ENCODE measurements at regions of chr14 and their contacts with region 1.

Region 1: DNA sequence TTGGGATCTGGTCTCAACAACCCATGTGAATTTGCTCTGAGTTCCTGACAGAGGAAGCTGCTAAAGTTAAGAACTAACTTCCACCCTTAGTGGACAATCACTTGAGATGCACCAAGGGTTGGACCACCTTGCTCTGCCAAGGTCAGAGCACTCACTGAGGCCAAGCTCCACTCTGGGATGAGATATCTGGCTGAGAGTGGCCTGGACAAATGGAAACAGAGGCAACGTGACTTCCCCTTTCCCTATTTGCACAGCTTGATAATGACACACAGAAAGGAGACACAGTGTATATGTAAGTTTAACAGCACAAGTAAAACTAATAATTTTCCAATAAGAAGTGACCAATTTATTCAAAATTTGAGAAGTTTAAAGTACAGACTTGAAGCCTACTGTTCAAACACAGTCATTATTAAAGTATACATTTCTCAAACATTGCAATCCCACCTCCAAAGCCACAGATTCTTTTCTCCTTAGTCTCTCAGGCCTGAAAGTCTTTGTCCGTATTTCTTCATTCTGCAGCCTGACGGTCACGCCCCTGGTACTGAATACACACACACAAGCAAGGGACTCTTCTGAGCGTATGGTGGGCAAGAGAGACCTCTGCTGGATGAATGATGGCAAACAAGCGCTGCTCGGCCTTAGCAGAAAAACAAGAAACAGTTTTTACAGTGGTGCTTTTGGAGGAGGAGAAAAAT is 28.6 kb downstream of the TMEM30B start:
- DNase-seq: peak; percentile 99
- ATAC-seq: peak; percentile 91
- H3K4me3 ChIP-seq: no peak overlapping the region
- H3K27ac ChIP-seq: peak overlapping the region; percentile 97
- H3K4me1 ChIP-seq: peaks cover 14% of the 10 kb centered on the region
- H3K27me3 ChIP-seq: no peaks in the 10 kb centered on the region
- CTCF ChIP-seq: peak; percentile 98
- POLR2A ChIP-seq: peak; percentile 78
- RAD21 ChIP-seq: peak; percentile 100

Region 2: GRCh38 chr14:60622917-60623257 is 629.6 kb before region 1 on chr14:
- CTCF ChIA-PET with region 1: interaction called, 4 read pairs
- POLR2A ChIA-PET with region 1: no interaction called
- dilution Hi-C with region 1: no loop called
- in situ Hi-C with region 1: no loop called
- intact Hi-C with region 1: loop called (anchors 1 kb)
- DNase-seq: peak; percentile 70
- ATAC-seq: no peak
- H3K4me3 ChIP-seq: no peak overlapping the region
- H3K27ac ChIP-seq: peak overlapping the region; percentile 53; the same call in 1 of the 2 replicates
- H3K4me1 ChIP-seq: peaks cover 8% of the 10 kb centered on the region
- H3K27me3 ChIP-seq: no peaks in the 10 kb centered on the region
- CTCF ChIP-seq: no peak
- POLR2A ChIP-seq: no peak
- RAD21 ChIP-seq: no peak

Region 3: GRCh38 chr14:60724137-60724619 is 528.3 kb before region 1 on chr14 and contains the start of gene SIX4:
- CTCF ChIA-PET with region 1: interaction called, 3 read pairs
- POLR2A ChIA-PET with region 1: no interaction called
- dilution Hi-C with region 1: no loop called
- in situ Hi-C with region 1: loop called (anchors 5 kb)
- intact Hi-C with region 1: loop called (anchors 1 kb)
- DNase-seq: peak; percentile 92
- ATAC-seq: peak; percentile 81
- H3K4me3 ChIP-seq: peak within 1 kb of the TSS; percentile 71
- H3K27ac ChIP-seq: peak within 1 kb of the TSS; percentile 78
- H3K4me1 ChIP-seq: peaks cover 10% of the 10 kb centered on the region
- H3K27me3 ChIP-seq: no peaks in the 10 kb centered on the region
- CTCF ChIP-seq: no peak
- POLR2A ChIP-seq: peak; percentile 82
- RAD21 ChIP-seq: peak; percentile 6; the same call in 1 of the 2 replicates
- total RNA-seq, gene SIX4: 28.1 and 42.7 TPM in 2 replicates

Region 4: DNA sequence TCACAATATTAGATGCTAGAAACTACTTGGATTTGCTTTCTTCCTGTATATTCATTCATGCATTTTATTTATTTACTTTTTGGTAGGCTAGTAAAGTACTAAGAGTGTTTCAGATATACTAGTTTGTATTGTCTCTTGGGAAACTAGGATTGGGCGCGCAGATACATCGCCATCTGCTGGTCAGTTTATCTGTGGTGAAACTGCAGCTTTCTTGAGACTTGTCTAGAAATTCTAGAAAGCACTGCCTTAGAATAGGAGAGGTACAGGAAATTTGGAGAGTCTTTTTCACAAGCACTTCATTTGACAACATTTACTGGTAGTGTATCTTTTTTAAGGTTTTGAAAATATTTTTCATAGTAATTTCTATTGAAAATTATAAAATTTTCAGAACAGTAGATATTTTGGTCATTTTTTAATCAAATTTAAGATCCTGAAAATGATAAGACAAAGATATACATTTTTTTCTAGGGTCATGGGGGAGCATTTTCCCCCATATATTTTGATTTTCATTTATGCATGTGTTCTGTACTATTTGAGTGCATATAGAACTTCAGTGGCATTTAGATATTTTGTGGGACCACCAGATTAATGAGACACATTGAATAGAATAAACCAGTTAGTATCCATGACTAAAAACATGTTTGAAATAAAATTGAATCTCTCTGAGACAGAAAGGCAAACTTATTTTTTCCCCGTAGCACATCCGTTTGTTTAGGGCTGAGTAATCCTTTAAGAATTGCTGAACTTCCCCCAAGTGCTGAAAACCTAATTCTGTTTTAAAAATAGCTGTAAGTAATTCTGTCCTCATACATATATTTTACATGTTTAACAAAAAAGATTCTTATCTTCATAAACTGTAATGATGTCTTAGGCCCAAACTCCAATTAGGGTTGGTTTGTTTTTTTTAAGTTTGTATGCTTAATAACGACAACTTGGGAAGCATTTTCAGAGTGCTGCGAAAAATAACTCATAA is 227.0 kb before region 1 on chr14:
- CTCF ChIA-PET with region 1: interaction called, 7 read pairs
- POLR2A ChIA-PET with region 1: no interaction called
- dilution Hi-C with region 1: no loop called
- in situ Hi-C with region 1: no loop called
- intact Hi-C with region 1: loop called (anchors 1 kb)
- DNase-seq: peak; percentile 80
- ATAC-seq: peak; percentile 81
- H3K4me3 ChIP-seq: no peak overlapping the region
- H3K27ac ChIP-seq: peak overlapping the region; percentile 24; the same call in 1 of the 2 replicates
- H3K4me1 ChIP-seq: peaks cover 3% of the 10 kb centered on the region; the same call in 1 of the 2 replicates
- H3K27me3 ChIP-seq: no peaks in the 10 kb centered on the region
- CTCF ChIP-seq: peak; percentile 84
- POLR2A ChIP-seq: no peak
- RAD21 ChIP-seq: peak; percentile 81

Region 5: DNA sequence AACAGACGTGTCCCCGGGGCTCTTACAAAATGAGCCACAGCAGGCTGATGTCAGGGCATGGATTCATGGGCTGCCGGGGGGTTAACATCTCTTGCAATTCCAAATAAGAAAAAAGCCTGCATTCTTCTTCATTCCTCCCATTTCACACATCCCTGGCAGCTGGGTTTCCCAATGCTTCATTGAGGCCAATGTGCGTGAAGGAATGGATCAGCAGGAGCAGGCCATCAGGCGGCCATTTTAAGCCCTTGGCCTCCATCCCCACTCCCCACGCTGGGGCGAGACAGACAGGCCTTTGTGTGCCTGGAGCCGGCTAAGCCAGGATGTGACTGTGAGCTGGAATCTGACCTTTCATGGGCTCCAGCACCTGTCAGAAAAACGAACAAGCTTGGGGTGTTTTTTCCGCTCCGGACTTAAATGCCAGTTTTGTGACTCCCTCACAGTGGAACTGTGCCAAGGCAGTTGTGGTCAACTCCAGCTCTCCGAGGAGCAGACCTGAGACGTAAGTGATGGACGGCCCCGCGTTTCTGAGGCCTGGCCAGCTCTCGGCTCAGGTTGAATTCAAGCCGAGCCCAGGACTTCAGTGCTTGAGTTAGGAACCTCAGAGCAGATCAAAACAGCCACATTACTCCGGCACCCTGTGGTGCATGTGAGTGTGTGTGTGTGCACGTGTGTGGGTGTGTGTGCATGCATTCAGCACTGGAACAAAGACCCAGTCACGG is 104.5 kb before region 1 on chr14:
- CTCF ChIA-PET with region 1: interaction called, 4 read pairs
- POLR2A ChIA-PET with region 1: interaction called, 7 read pairs
- dilution Hi-C with region 1: no loop called
- in situ Hi-C with region 1: no loop called
- intact Hi-C with region 1: loop called (anchors 1 kb)
- DNase-seq: peak; percentile 100
- ATAC-seq: peak; percentile 60
- H3K4me3 ChIP-seq: no peak overlapping the region
- H3K27ac ChIP-seq: peak overlapping the region; percentile 99
- H3K4me1 ChIP-seq: peaks cover 36% of the 10 kb centered on the region
- H3K27me3 ChIP-seq: no peaks in the 10 kb centered on the region
- CTCF ChIP-seq: no peak
- POLR2A ChIP-seq: peak; percentile 22; the same call in 1 of the 2 replicates
- RAD21 ChIP-seq: no peak